Heart right ventricle (tissue), 16 donors: ENCODE measurements at regions of chr3 and their contacts with region 1.

Region 1: DNA sequence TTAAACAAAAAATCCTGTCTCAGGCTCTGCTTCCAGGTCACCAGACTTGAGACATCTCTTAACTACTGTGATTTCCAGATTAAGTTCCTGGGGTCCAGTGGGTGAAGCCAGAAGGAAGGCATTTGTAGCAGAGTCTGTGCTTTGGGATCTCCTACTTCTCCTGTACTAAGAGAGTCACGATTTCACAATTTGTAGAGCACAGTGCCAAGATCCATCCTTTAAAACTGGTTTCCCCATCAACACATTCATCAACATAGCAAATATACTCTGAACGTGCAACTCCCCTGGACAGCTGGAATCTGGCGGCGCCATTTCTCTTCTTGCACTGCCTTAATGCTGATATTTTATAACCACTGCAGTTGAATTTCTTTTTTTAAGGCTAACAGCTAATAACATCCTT is 33.2 kb downstream of the CDCP1 start:
- DNase-seq: no peak
- ATAC-seq: peak in 6 of 8 donors; percentile 24 to 53 (median 43)
- H3K4me3 ChIP-seq: no peak overlapping the region
- H3K27ac ChIP-seq: peak overlapping the region; percentile 43 to 87 (median 78)
- H3K4me1 ChIP-seq: peaks cover 0 to 26% (median 5%) of the 10 kb centered on the region in 9 donors
- H3K27me3 ChIP-seq: no peaks in the 10 kb centered on the region
- CTCF ChIP-seq: no peak

Region 2: DNA sequence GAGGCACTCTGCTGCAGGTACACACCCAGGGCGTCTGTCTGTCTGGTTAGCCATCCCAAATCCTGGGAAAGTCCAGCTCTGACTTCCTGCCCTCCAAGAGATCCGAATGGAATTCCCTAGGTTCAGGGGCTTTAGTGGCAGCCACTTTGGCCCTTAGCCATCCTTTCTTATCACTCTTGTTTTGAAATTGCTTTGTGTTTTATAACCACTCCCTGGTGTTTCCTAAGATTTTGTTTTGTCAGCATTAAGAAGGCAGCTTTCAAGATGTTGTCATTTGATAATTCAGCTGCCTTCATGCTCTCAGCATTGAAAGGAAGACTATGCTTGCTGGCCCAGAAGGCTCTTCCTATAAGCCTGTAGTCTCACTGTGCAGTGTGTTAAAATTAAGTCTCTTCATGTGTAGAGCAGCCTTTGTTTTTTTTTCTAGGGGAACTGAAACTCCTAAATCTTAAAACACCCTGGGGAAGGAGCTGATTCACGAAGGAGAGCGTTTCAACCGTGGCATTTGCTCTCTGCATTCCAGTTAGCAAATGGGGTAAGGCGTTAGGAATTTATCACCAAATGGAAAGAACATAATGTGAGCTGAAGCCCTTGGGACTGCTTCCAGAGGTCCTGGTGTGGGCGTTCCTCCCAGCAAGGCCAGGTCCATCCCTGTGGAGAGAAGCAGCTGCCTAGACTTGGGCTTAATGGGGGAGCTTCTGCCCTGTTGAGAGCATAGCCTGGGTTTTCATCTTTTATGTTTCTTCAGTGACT is 101.0 kb before region 1 on chr3:
- intact Hi-C with region 1: no loop called
- DNase-seq: peak; percentile 64 to 79
- ATAC-seq: peak; percentile 77 to 94 (median 86)
- H3K4me3 ChIP-seq: peak overlapping the region in 2 of 10 donors; percentile 3 to 17
- H3K27ac ChIP-seq: peak overlapping the region; percentile 67 to 91 (median 84)
- H3K4me1 ChIP-seq: peaks cover 11 to 61% (median 33%) of the 10 kb centered on the region in 9 donors
- H3K27me3 ChIP-seq: no peaks in the 10 kb centered on the region
- CTCF ChIP-seq: no peak

Region 3: DNA sequence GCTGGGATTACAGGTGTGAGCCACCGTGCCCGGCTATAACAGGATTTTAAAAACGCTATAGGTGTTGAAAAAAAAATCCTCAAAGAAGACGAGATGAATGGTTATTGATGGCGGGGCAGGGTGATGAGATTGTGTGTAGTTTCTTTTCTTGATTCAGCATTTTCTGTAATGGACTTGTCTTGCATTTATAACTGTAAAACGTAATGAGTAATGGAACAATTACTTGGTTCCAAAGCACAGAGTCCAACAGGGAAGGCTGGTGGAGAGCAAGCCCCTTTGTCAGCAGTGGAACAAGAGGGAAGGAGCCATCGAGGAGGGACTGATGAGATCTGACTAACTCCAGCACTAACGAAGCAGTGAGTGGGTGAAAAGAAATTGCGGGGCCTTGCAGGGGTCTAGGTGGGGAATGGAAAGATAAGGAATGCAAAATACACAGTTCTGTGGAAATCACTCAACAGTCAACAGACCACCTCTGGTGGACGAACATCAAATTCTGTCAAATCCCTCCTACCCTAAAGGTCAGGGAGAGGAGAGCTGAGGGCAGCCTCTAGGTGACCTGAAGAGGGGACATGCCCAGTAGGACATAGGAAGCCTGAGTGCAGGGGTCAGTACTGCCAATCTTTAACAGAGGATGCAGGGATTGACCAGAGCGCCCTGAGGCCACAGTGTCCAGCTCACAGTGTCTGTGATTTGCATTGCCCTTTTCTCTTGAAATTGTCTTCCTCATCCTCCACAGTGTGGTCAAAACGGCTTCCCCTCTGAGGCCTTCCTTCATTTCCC is 56.4 kb after region 1 on chr3:
- intact Hi-C with region 1: loop called in 1 of 10 experiments (anchors 2 kb)
- DNase-seq: no peak
- ATAC-seq: no peak
- H3K4me3 ChIP-seq: no peak overlapping the region
- H3K27ac ChIP-seq: peak overlapping the region in 7 of 10 donors; percentile 15 to 72 (median 46)
- H3K4me1 ChIP-seq: peaks cover 0 to 46% (median 14%) of the 10 kb centered on the region in 9 donors
- H3K27me3 ChIP-seq: no peaks in the 10 kb centered on the region
- CTCF ChIP-seq: no peak

Region 4: DNA sequence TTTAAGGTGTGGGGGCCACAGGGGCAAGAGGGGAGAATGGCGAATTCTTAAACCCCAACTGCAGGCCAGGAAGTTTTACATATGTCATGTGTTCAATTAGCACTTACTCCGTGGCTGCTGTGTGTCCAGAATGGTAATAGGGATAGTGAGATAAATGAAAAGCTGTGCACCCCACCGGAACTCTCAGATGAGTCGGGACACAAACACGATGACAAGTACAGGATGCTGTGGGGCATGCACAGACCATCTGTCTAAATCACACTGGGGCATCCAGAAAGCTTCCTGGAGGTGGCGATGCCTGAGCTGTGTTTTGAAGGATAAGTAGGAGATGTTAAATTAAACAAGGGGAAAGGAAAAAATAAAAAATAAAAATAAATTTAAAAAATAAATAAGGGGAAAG is 131.4 kb after region 1 on chr3:
- intact Hi-C with region 1: no loop called
- DNase-seq: no peak
- ATAC-seq: no peak
- H3K4me3 ChIP-seq: no peak overlapping the region
- H3K27ac ChIP-seq: no peak overlapping the region
- H3K4me1 ChIP-seq: no peaks in the 10 kb centered on the region
- H3K27me3 ChIP-seq: peaks cover 0 to 22% (median 7%) of the 10 kb centered on the region in 7 donors
- CTCF ChIP-seq: no peak